ENCODE measurements at regions of chr3 and their contacts with region 1.

Region 1: GRCh38 chr3:114383875-114384557 is 90.2 kb downstream of the TIGIT start:
- DNase-seq: peak; percentile 88
- H3K4me3 ChIP-seq: peak overlapping the region; percentile 35
- H3K27ac ChIP-seq: peak overlapping the region; percentile 80
- H3K4me1 ChIP-seq: peaks cover 29% of the 10 kb centered on the region
- H3K27me3 ChIP-seq: no peaks in the 10 kb centered on the region
- CTCF ChIP-seq: peak; percentile 96

Region 2: GRCh38 chr3:114411811-114412803 is 28.1 kb after region 1 on chr3:
- CTCF ChIA-PET with region 1: interaction called, 6 read pairs
- POLR2A ChIA-PET with region 1: no interaction called
- intact Hi-C with region 1: loop called (anchors 2 kb)
- DNase-seq: peak; percentile 61
- H3K4me3 ChIP-seq: peak overlapping the region; percentile 20
- H3K27ac ChIP-seq: peak overlapping the region; percentile 86
- H3K4me1 ChIP-seq: peaks cover 84% of the 10 kb centered on the region
- H3K27me3 ChIP-seq: no peaks in the 10 kb centered on the region
- CTCF ChIP-seq: peak; percentile 34; the same call in 1 of the 2 replicates

Region 3: DNA sequence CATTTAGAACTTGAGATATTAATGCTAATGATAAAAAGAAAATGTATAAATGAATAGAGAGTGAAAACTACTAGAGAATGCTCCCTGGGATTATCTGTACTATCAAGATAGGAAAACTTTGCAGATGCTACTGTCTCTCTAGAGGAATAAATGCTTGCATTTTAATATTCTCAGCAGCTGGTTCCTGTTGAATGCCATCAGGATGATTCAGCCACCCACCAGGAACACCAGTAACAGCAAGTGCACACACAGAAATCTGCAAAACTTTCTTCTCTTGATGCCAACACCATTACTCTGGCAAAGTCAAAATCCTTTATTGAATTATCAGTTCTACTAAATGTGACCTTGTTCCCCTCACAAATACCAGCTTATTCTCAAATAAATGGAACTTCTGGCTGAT is 58.2 kb after region 1 on chr3:
- CTCF ChIA-PET with region 1: interaction called, 12 read pairs
- POLR2A ChIA-PET with region 1: no interaction called
- intact Hi-C with region 1: loop called (anchors 2 kb)
- DNase-seq: peak; percentile 87
- H3K4me3 ChIP-seq: peak overlapping the region; percentile 19
- H3K27ac ChIP-seq: peak overlapping the region; percentile 71
- H3K4me1 ChIP-seq: peaks cover 67% of the 10 kb centered on the region
- H3K27me3 ChIP-seq: no peaks in the 10 kb centered on the region
- CTCF ChIP-seq: 0 out of 2 replicates have a peak, but pooled peaks have one; percentile 10

Region 4: DNA sequence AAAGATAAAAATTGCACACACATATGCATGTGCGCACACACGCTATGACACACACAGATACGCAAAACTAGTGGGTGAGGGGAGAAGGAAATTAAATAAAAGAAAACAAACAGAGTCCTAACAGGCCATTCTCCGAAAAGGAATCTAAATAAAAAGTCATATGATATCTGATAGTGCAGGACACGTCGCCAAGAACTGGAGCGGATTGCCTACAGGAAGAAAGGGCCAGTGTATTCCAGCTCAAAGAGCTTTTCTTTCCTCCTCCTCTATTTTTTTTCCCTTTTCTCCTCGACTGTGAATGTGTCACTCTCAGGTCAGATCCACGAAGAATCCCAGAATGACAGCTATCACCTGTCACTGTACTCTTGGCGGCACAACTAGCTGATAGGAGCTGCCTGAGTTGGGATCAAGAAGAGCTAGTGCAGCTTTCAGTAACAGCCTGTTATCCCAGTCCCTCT is 67.6 kb after region 1 on chr3:
- CTCF ChIA-PET with region 1: interaction called, 12 read pairs
- POLR2A ChIA-PET with region 1: interaction called, 3 read pairs
- intact Hi-C with region 1: loop called (anchors 2 kb)
- DNase-seq: no peak
- H3K4me3 ChIP-seq: peak overlapping the region; percentile 58
- H3K27ac ChIP-seq: peak overlapping the region; percentile 83
- H3K4me1 ChIP-seq: peaks cover 67% of the 10 kb centered on the region
- H3K27me3 ChIP-seq: no peaks in the 10 kb centered on the region
- CTCF ChIP-seq: no peak

Region 5: GRCh38 chr3:114582929-114583328 is 198.9 kb after region 1 on chr3:
- CTCF ChIA-PET with region 1: interaction called, 4 read pairs
- POLR2A ChIA-PET with region 1: no interaction called
- intact Hi-C with region 1: loop called (anchors 10 kb)
- DNase-seq: no peak
- H3K4me3 ChIP-seq: no peak overlapping the region
- H3K27ac ChIP-seq: peak overlapping the region; percentile 68
- H3K4me1 ChIP-seq: peaks cover 21% of the 10 kb centered on the region
- H3K27me3 ChIP-seq: no peaks in the 10 kb centered on the region
- CTCF ChIP-seq: no peak

Measured in A673 (cell line).